Aorta (tissue), 5 donors: ENCODE measurements at regions of chr1 and their contacts with region 1.

Region 1: GRCh38 chr1:204565617-204566582 is 49.7 kb downstream of the MDM4 start:
- DNase-seq: no peak
- ATAC-seq: peak; percentile 76
- H3K4me3 ChIP-seq: no peak overlapping the region
- H3K27ac ChIP-seq: no peak overlapping the region
- H3K4me1 ChIP-seq: no peaks in the 10 kb centered on the region
- H3K27me3 ChIP-seq: no peaks in the 10 kb centered on the region

Region 2: GRCh38 chr1:203985044-203985443 is 580.9 kb before region 1 on chr1:
- intact Hi-C with region 1: no loop called
- DNase-seq: no peak
- ATAC-seq: no peak
- H3K4me3 ChIP-seq: no peak overlapping the region
- H3K27ac ChIP-seq: no peak overlapping the region
- H3K4me1 ChIP-seq: no peaks in the 10 kb centered on the region
- H3K27me3 ChIP-seq: no peaks in the 10 kb centered on the region

Region 3: DNA sequence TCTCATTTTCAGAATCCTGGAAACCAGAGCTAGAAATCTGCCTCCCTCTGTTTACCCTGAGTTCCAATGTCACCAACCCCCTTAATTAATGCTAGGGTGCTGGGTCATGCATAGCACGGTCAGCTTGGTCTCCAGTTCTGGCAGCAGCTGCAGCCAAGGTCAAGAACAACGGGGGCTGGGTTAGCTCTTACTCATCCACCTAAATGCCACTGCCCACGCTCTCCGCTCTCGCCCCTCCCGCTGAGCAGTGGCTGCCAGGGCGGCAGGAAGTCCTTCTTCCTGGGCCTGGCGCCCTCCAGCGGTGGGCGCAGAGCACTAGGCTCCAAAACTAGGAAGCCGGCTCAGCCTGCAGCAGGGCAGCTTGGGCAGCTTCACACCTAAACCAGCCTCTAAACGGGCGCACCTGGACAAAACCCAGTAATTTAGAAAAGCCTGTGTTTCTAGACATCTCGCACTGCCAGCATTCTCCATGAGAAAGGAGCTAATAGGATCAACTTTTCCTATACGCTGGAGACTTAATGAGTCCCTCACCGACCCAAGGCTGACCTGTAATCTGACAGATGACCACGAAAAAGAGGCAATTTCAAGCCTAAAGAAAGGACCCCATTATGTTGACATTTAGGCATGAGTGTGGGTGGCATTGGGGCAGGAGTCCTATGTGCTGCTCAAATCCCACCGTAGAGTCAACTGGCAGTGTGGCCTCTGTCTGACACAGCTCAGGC is 198.0 kb after region 1 on chr1:
- intact Hi-C with region 1: loop called in 1 of 2 experiments (anchors 5 kb)
- DNase-seq: peak; percentile 86 to 87
- ATAC-seq: peak; percentile 92
- H3K4me3 ChIP-seq: no peak overlapping the region
- H3K27ac ChIP-seq: no peak overlapping the region
- H3K4me1 ChIP-seq: no peaks in the 10 kb centered on the region
- H3K27me3 ChIP-seq: no peaks in the 10 kb centered on the region